ENCODE measurements at regions of chr1 and their contacts with region 1.

Region 1: DNA sequence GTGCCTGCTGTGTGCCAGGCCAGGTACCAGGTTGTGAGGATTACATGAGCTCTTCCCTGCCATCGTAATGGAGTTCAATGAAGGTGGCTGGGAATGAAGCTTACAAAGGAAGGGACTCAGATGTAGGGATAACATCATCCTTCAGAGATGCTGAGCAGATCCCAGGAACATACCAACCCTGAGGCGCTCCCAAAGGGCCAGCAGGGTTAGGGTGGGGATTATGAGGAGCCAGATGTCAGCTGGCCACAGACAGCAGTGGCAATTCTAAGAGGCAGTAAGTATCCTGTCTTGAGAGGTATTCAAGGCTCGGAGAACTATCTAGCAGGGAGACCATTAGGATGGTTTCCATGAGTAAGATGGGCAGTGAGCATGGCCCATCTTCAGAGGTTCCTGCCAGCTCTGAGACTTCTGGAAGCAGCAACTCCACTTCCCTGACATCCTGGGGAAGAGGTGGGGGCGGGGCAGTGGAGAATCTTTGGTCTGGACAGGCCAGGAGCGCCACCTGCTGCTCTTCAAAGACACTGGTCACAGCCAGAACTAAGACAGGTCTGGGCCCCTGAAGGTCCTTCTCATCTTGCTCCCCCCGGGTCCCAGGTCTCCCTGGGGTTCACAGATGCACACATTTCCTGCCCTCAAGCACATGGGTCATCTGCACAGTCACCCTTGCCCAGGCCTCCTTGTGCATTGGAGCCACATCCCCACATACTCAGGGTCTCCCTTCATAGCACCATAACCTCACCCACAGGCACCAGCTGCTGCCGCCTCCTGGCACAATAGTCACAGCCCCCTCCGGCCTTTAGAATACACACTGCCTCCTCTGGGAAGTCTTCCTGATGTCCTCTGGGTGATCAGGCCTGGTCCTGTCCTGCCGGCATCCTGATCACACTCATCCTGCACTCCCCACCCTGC is 2.7 kb upstream of the SDC3 start:
- DNase-seq: peak; percentile 87
- ATAC-seq: peak; percentile 71
- H3K4me3 Mint-ChIP-seq: no peak overlapping the region
- H3K27ac Mint-ChIP-seq: no peak overlapping the region
- H3K4me1 Mint-ChIP-seq: peaks cover 33% of the 10 kb centered on the region
- H3K27me3 Mint-ChIP-seq: peaks cover 17% of the 10 kb centered on the region
- CTCF ChIP-seq: peak; percentile 59; the same call in 1 of the 2 replicates

Region 2: GRCh38 chr1:30718636-30719405 is 192.5 kb before region 1 on chr1:
- CTCF ChIA-PET with region 1: interaction called, 56 read pairs
- POLR2A ChIA-PET with region 1: no interaction called
- DNase-seq: peak; percentile 92
- ATAC-seq: peak; percentile 63
- H3K4me3 Mint-ChIP-seq: peak overlapping the region; percentile 75
- H3K27ac Mint-ChIP-seq: no peak overlapping the region
- H3K4me1 Mint-ChIP-seq: peaks cover under 1% of the 10 kb centered on the region
- H3K27me3 Mint-ChIP-seq: peaks cover 4% of the 10 kb centered on the region
- CTCF ChIP-seq: peak; percentile 98

Region 3: GRCh38 chr1:30790850-30791778 is 120.2 kb before region 1 on chr1:
- CTCF ChIA-PET with region 1: interaction called, 606 read pairs
- POLR2A ChIA-PET with region 1: interaction called, 4 read pairs
- DNase-seq: no peak
- ATAC-seq: no peak
- H3K4me3 Mint-ChIP-seq: no peak overlapping the region
- H3K27ac Mint-ChIP-seq: no peak overlapping the region
- H3K4me1 Mint-ChIP-seq: peaks cover 4% of the 10 kb centered on the region
- H3K27me3 Mint-ChIP-seq: no peaks in the 10 kb centered on the region; the same call in 1 of the 2 replicates
- CTCF ChIP-seq: no peak

Region 4: GRCh38 chr1:30816211-30817076 is 94.9 kb before region 1 on chr1:
- CTCF ChIA-PET with region 1: interaction called, 23 read pairs
- POLR2A ChIA-PET with region 1: no interaction called
- DNase-seq: peak; percentile 91
- ATAC-seq: peak; percentile 74
- H3K4me3 Mint-ChIP-seq: no peak overlapping the region
- H3K27ac Mint-ChIP-seq: no peak overlapping the region
- H3K4me1 Mint-ChIP-seq: peaks cover 20% of the 10 kb centered on the region
- H3K27me3 Mint-ChIP-seq: no peaks in the 10 kb centered on the region
- CTCF ChIP-seq: no peak

Region 5: GRCh38 chr1:30856260-30856790 is 55.0 kb before region 1 on chr1:
- CTCF ChIA-PET with region 1: interaction called, 20 read pairs
- POLR2A ChIA-PET with region 1: no interaction called
- DNase-seq: no peak
- ATAC-seq: peak; percentile 8; the same call in 1 of the 2 replicates
- H3K4me3 Mint-ChIP-seq: no peak overlapping the region
- H3K27ac Mint-ChIP-seq: no peak overlapping the region
- H3K4me1 Mint-ChIP-seq: peaks cover 58% of the 10 kb centered on the region
- H3K27me3 Mint-ChIP-seq: no peaks in the 10 kb centered on the region
- CTCF ChIP-seq: no peak

Region 6: GRCh38 chr1:30895944-30896660 is 15.2 kb before region 1 on chr1:
- CTCF ChIA-PET with region 1: interaction called, 11 read pairs
- POLR2A ChIA-PET with region 1: no interaction called
- DNase-seq: no peak
- ATAC-seq: no peak; the same call in 1 of the 2 replicates
- H3K4me3 Mint-ChIP-seq: no peak overlapping the region
- H3K27ac Mint-ChIP-seq: peak overlapping the region; percentile 9; the same call in 1 of the 2 replicates
- H3K4me1 Mint-ChIP-seq: peaks cover 16% of the 10 kb centered on the region
- H3K27me3 Mint-ChIP-seq: no peaks in the 10 kb centered on the region
- CTCF ChIP-seq: no peak

Region 7: DNA sequence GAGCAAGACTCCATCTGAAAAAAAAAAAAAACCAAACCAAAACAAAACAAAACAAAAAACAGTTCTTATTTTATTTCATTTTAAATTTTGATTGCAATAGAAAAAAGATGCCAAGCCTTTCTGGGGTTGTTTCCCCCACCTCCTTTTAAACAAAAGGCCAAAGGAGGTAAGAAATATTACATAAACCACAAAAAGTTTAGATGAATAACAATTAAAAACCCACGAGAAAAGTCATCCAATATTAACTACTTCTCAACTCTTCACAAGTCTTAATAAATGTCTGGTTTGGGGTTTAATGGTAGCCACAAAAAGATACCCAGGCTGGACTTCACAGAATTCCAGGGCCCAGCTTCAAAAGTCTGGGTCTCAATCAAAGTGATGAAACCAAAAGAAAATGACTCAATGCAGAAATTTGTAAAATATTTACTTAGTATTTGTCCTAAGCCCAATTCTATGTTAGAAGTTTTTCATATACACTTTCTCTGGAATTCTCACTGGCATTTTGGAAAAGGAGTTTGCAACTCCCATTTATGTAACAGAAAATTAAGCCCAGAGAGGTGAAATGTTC is 44.2 kb after region 1 on chr1:
- CTCF ChIA-PET with region 1: no interaction called
- POLR2A ChIA-PET with region 1: no interaction called
- DNase-seq: no peak
- ATAC-seq: no peak
- H3K4me3 Mint-ChIP-seq: no peak overlapping the region
- H3K27ac Mint-ChIP-seq: no peak overlapping the region
- H3K4me1 Mint-ChIP-seq: no peaks in the 10 kb centered on the region
- H3K27me3 Mint-ChIP-seq: no peaks in the 10 kb centered on the region
- CTCF ChIP-seq: no peak

Measured in WTC11 (cell line).